ENCODE measurements at regions of chr22 and their contacts with region 1.

Region 1: DNA sequence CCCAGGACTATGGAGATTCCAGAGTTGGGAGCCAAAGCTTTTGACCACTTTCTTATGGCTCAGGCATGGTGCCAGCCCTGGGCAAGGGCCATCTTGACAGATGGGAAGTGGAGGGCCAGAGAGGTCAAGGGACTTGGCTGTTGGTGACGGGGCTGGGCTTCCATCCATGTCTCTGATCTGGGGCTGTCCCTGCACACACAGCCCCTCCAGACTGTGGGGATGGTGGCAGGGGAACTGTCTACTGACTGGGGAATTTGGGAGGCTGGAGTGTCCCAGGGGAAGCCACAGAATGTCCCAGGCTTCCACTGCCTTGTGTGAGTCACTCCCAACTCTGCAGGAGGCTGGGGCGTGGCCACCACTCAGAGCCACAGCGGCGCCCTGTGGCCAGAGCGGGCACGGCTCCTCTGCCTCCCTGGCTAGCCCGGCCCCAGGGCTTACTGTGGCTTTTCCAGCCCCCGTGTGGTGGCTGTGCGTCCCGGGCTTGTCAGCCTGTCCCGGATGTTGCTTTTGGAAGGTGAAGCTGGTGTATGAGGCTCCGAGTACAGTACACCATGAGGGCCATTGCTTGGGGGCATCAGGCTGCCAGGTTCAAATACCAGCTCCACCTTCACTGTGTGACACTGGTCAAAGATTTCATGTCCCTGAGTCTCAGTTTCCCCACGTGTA is 19.6 kb downstream of the C22orf23 start:
- DNase-seq: peak; percentile 90
- H3K4me3 ChIP-seq: no peak overlapping the region
- H3K27ac ChIP-seq: no peak overlapping the region
- H3K4me1 ChIP-seq: peaks cover 24% of the 10 kb centered on the region
- H3K27me3 ChIP-seq: no peaks in the 10 kb centered on the region
- CTCF ChIP-seq: peak; percentile 91 to 99

Region 2: DNA sequence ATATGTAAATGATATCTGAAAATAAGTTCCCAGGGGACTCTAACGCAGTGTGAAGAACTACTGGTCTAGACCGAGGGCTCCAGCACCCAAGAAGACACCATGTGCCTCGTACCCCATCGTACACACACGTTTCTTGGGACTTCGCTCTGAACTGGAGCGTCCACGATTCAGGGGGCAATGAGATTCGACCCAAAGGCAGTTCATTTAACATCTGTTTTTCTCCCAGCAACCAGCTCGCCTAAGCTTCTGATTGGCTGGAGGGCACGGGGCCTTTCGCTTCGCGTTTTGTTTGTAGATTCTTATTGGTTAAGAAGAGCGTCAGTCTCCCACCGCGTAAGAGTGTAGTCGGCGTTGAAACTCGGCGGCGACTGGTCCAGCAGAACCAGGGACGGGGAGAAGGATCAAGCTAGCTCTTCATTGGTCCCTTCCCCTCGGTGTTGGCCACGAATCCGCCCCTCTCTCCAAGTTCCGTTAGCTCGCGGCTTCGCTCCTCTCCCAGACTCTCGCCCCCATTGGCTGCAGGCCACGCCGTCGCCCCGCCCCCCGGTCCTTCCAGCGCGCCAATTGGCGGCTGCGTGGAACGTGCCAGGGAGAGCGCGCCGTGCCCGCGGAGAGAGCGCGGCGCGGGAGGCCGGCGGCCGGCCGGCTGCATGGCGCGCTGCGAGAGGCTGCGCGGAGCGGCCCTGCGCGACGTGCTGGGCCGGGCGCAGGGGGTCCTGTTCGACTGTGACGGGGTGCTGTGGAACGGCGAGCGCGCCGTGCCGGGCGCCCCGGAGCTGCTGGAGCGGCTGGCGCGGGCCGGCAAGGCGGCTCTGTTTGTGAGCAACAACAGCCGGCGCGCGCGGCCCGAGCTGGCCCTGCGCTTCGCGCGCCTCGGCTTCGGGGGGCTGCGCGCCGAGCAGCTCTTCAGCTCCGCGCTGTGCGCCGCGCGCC is 275.4 kb before region 1 on chr22 and contains the start of gene PDXP:
- CTCF ChIA-PET with region 1: no interaction called
- dilution Hi-C with region 1: no loop called
- in situ Hi-C with region 1: no loop called
- intact Hi-C with region 1: no loop called
- DNase-seq: peak; percentile 100
- H3K4me3 ChIP-seq: peak within 1 kb of the TSS; percentile 47 to 84 (median 55)
- H3K27ac ChIP-seq: peak within 1 kb of the TSS; percentile 41
- H3K4me1 ChIP-seq: peaks cover 21% of the 10 kb centered on the region
- H3K27me3 ChIP-seq: no peaks in the 10 kb centered on the region
- CTCF ChIP-seq: no peak
- total RNA-seq, gene PDXP: 5.8 to 6.9 TPM

Region 3: GRCh38 chr22:37849089-37849751 is 84.6 kb before region 1 on chr22 and contains the start of gene EIF3L:
- CTCF ChIA-PET with region 1: no interaction called
- dilution Hi-C with region 1: loop called (anchors 5 kb)
- in situ Hi-C with region 1: no loop called
- intact Hi-C with region 1: no loop called
- DNase-seq: peak; percentile 87
- H3K4me3 ChIP-seq: peak within 1 kb of the TSS; percentile 70 to 92 (median 86)
- H3K27ac ChIP-seq: peak within 1 kb of the TSS; percentile 84
- H3K4me1 ChIP-seq: peaks cover 10% of the 10 kb centered on the region
- H3K27me3 ChIP-seq: no peaks in the 10 kb centered on the region
- CTCF ChIP-seq: no peak
- total RNA-seq, gene EIF3L: 350 to 368 TPM

Region 4: DNA sequence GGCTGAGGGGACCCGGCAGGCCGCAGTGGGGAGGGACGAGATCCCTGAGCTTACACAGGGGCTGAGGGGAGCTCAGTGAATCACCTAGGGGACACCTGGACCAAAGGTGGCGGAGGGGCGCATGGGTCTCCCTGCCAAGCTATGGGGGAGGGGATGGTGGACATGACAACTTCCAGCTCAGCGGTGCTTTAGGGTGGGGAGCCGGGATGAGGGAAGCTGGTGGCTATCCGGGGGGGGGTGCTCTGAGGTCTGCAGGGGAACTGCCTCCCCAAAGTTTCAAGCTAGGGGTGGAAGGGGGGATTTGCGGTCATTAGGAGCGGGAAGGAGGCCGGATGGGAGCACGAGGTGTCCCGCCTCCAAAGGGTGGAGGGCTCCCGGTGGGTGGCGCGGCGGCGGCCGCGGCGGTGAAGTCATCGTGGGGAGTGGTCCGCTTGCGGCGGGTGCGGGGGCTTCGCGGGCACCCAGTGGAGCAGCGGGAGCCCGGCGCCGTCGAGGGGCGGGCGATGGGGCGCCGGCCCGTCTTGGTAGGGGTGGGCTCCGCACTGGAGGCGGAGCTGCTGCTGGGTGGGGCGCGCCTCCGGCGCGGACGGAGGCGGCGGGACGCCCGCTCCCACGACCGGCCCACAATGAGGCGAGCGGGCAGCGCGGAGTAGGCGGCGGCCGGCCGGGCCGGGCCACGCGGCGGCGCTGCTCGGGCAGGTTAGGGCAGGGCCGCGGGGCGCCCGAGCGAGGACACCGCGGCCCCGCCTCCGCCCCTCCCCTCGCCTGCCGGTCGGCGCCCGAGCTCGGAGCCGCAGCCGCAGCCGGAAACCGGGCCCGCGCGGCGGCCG is 28.1 kb before region 1 on chr22 and contains the start of gene MICALL1:
- CTCF ChIA-PET with region 1: no interaction called
- dilution Hi-C with region 1: no loop called
- in situ Hi-C with region 1: no loop called
- intact Hi-C with region 1: loop called (anchors 1 kb)
- DNase-seq: peak; percentile 87
- H3K4me3 ChIP-seq: peak within 1 kb of the TSS; percentile 72 to 93 (median 87)
- H3K27ac ChIP-seq: peak within 1 kb of the TSS; percentile 95
- H3K4me1 ChIP-seq: peaks cover 48% of the 10 kb centered on the region
- H3K27me3 ChIP-seq: no peaks in the 10 kb centered on the region
- CTCF ChIP-seq: no peak
- total RNA-seq, gene MICALL1: 247 to 249 TPM

Region 5: DNA sequence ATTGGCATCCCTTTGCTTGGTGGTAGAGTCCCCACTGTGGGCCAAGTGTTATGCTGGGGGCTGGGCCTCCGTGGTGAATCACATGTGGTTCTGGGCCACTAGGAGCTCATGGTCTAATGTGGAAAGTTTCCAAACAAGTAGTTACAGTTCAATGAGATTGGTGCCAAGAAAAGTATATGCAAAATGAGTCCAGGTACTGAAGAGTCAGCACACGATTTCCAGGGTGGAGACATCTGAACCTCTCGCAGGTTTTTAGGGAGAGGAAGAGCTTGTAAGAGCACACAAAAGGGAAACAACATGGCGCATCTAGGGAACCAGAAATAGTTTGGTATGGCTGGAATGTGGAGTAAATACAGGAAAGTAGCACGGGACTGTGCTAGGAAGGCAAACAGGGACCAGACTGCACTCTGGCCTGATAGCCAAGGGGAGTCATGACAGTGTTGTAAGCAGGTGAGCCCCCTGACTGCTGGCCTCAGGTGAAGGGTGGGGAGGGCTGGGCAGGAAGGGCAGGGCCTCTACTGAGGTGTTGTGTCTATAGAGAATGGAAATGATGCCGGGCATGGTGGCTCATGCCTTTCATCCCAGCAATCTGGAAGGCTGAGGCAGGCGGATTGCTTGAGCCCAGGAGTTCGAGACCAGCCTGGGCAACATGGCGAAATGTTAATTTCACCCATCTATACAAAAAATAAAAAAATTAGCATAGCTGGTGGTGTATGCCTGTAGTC is 32.3 kb after region 1 on chr22:
- CTCF ChIA-PET with region 1: no interaction called
- dilution Hi-C with region 1: loop called (anchors 5 kb)
- in situ Hi-C with region 1: no loop called
- intact Hi-C with region 1: no loop called
- DNase-seq: peak; percentile 17
- H3K4me3 ChIP-seq: no peak overlapping the region
- H3K27ac ChIP-seq: no peak overlapping the region
- H3K4me1 ChIP-seq: peaks cover 11% of the 10 kb centered on the region
- H3K27me3 ChIP-seq: no peaks in the 10 kb centered on the region
- CTCF ChIP-seq: no peak

Region 6: DNA sequence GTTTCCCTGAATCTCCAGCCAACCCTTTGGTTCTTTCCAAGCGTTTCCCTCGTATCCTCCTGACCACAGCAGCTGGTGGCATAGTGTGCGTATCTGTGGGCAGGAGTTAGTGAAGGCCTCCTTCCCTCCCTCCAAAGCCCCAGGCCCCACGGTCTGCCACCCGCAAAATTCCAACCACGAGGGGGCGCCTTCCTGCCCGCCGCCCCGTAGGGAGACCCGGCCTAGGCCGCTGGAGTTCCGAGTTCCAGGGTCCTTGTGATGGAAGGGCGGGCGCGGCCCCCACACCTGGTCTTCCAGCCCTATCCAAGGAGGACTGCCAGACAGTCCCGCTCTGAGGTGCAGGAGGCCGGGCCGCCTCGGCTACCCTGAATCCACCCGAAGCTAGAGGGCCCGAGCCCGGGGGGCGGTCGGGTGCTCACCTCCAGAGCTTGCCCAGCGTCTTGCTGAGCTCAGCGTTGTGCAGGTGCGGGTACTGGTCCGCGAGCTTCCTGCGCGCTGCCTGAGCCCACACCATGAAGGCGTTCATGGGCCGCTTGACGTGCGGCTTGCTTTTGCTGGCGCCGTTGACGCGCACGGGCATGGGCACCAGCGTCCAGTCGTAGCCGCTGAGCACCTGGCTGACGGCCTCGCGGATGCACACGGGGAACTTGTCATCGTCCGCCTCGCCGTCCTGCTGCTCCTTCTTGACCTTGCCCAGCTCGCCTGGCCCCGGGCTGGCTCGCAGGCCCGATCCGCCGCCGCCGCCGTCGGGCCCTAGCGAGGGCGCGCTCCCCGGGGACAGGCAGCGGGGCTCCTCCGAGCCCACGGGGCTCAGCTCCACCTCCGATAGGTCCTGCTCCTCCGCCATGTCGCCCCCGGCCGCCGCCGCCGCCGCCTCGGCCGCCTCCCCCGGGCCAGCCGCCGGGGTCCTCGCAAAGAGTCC is 49.4 kb after region 1 on chr22:
- CTCF ChIA-PET with region 1: no interaction called
- dilution Hi-C with region 1: no loop called
- in situ Hi-C with region 1: no loop called
- intact Hi-C with region 1: no loop called
- DNase-seq: no peak
- H3K4me3 ChIP-seq: no peak overlapping the region
- H3K27ac ChIP-seq: no peak overlapping the region
- H3K4me1 ChIP-seq: no peaks in the 10 kb centered on the region
- H3K27me3 ChIP-seq: peaks cover 3% of the 10 kb centered on the region
- CTCF ChIP-seq: peak in 1 of 2 donors; percentile 36